Activated naive CD4-positive, alpha-beta T cell treated with anti-CD3 and anti-CD28 coated beads, Interleukin-2, amount 10 ng/mL, durations not matched to agents 7 days and 5 days (primary cell): ENCODE measurements at regions of chr14 and their contacts with region 1.

Region 1: DNA sequence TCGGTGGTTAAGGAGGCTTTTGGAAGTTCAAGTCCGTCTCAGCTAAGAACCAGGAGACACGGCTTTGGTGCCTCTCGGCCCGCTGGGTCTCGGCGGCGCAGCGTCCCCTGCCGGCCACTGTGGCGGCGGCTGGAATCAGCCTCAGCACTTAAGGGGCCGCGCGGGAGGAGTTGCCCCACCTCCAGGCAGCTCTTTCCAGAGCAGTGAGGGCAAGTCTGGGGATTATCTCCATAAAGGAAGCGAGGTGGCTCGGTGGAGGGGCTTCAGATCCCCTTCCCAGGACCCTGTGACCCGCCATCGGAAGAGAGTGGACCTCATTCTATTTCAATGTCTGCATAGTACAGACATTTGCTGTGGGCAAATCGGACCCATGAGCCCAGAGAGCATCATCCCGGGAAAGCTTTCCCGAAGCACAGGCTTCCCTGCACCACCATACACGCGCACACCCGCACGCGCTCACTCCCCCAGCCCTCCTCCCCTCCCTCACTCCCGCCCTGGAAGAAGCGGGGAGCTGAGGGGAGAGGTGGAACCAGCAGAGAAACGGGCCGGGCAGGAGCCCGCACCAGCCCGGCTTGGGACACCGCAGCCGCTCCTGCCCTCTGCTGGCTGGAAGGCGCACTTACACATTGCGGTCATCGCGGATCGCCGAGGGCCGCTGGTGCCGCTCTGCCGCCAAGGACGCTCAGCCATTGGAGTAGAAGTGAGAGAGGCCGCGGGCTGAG is 15.9 kb downstream of the RNASE2 start:
- DNase-seq: peak; percentile 84
- H3K4me3 Mint-ChIP-seq: peak overlapping the region; percentile 84
- H3K27ac Mint-ChIP-seq: peak overlapping the region; percentile 39
- H3K4me1 Mint-ChIP-seq: peaks cover 16% of the 10 kb centered on the region
- H3K27me3 Mint-ChIP-seq: peaks cover 58% of the 10 kb centered on the region

Region 2: GRCh38 chr14:20855652-20856291 is 115.4 kb before region 1 on chr14:
- CTCF ChIA-PET with region 1: interaction called, 57 read pairs
- DNase-seq: peak; percentile 68
- H3K4me3 Mint-ChIP-seq: no peak overlapping the region
- H3K27ac Mint-ChIP-seq: no peak overlapping the region
- H3K4me1 Mint-ChIP-seq: peaks cover 3% of the 10 kb centered on the region
- H3K27me3 Mint-ChIP-seq: peaks cover 28% of the 10 kb centered on the region

Region 3: GRCh38 chr14:20956376-20956976 is 14.7 kb before region 1 on chr14:
- CTCF ChIA-PET with region 1: interaction called, 17 read pairs
- DNase-seq: no peak
- H3K4me3 Mint-ChIP-seq: no peak overlapping the region
- H3K27ac Mint-ChIP-seq: no peak overlapping the region
- H3K4me1 Mint-ChIP-seq: peaks cover 28% of the 10 kb centered on the region
- H3K27me3 Mint-ChIP-seq: peaks cover 16% of the 10 kb centered on the region

Region 4: DNA sequence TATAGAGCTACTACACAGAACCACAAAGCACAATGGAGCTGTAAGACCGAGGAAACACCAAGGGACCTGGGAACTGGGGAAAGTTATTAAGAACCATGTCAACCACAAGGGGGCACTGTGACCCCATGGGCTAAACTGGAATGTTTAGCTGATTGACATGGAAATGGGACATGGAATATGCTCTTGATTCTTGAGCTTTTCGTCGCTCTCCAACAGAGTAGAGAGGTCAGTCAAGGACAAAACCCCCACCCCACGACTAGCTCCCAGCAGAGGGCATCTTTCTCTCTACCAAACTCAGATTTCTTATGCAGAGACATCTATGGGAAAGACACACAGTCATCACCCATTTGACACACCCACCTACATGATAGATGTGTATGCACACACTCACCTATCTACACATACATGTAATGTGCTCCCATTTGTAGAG is 43.6 kb after region 1 on chr14:
- CTCF ChIA-PET with region 1: interaction called, 15 read pairs
- DNase-seq: peak; percentile 86
- H3K4me3 Mint-ChIP-seq: no peak overlapping the region
- H3K27ac Mint-ChIP-seq: no peak overlapping the region
- H3K4me1 Mint-ChIP-seq: no peaks in the 10 kb centered on the region
- H3K27me3 Mint-ChIP-seq: peaks cover 37% of the 10 kb centered on the region

Region 5: GRCh38 chr14:21103710-21104447 is 132.7 kb after region 1 on chr14:
- CTCF ChIA-PET with region 1: interaction called, 11 read pairs
- DNase-seq: peak; percentile 97
- H3K4me3 Mint-ChIP-seq: peak overlapping the region; percentile 90
- H3K27ac Mint-ChIP-seq: peak overlapping the region; percentile 81
- H3K4me1 Mint-ChIP-seq: peaks cover 39% of the 10 kb centered on the region
- H3K27me3 Mint-ChIP-seq: peaks cover 32% of the 10 kb centered on the region